ENCODE measurements at regions of chr2 and their contacts with region 1.

Region 1: GRCh38 chr2:227890495-227891079 is 19.2 kb downstream of the DAW1 start:
- DNase-seq: no peak
- H3K4me3 ChIP-seq: no peak overlapping the region
- H3K27ac ChIP-seq: no peak overlapping the region
- H3K4me1 ChIP-seq: no peaks in the 10 kb centered on the region
- H3K27me3 ChIP-seq: no peaks in the 10 kb centered on the region
- CTCF ChIP-seq: peak; percentile 30 to 72 (median 47)

Region 2: GRCh38 chr2:227908261-227909054 is 17.9 kb after region 1 on chr2:
- intact Hi-C with region 1: no loop called
- DNase-seq: no peak
- H3K4me3 ChIP-seq: no peak overlapping the region
- H3K27ac ChIP-seq: no peak overlapping the region
- H3K4me1 ChIP-seq: no peaks in the 10 kb centered on the region
- H3K27me3 ChIP-seq: no peaks in the 10 kb centered on the region
- CTCF ChIP-seq: no peak

Region 3: DNA sequence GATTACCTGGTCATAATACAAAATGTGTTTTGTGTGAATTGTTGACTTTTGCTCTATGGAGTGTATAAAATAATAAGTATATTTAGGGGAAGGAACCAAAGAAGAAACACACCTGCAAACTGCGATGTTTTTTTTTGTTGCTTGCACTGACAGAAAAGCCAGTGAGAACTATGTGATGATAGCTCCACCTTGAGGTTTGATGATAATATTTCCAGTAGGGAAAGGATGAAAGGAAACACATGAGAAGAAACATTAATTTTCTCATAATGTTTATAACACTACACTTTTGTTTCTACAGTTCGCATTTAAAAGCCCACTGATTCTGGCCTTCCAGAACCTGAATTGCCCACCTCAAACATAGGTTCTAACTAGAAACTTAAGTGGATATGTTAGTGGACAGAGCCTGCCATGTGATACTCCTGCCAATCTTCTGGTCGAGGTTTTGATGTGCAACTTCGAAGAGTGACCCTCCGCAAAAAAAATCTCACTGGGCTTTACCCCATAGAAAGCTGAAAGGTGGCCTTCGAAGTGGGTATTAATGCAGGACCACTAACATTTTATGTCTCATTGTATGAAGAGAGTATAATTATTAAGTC is 767.3 kb after region 1 on chr2:
- intact Hi-C with region 1: loop called (anchors 5 kb)
- DNase-seq: no peak
- H3K4me3 ChIP-seq: no peak overlapping the region
- H3K27ac ChIP-seq: no peak overlapping the region
- H3K4me1 ChIP-seq: peaks cover 0 to 3% of the 10 kb centered on the region in 2 donors
- H3K27me3 ChIP-seq: no peaks in the 10 kb centered on the region
- CTCF ChIP-seq: peak in 2 of 3 experiments; percentile 19 to 38